Mammary epithelial cell (primary cell): ENCODE measurements at regions of chr12 and their contacts with region 1.

Region 1: GRCh38 chr12:92145731-92146496 is at the start of gene BTG1:
- DNase-seq: peak; percentile 100
- H3K4me3 ChIP-seq: peak within 1 kb of the TSS; percentile 83 to 100 (median 88)
- H3K27ac ChIP-seq: peak within 1 kb of the TSS; percentile 92
- H3K4me1 ChIP-seq: peaks cover 8% of the 10 kb centered on the region
- H3K27me3 ChIP-seq: no peaks in the 10 kb centered on the region
- CTCF ChIP-seq: no peak
- total RNA-seq, gene BTG1: 26.8 to 68.2 TPM

Region 2: GRCh38 chr12:91382081-91382543 is 763.8 kb before region 1 on chr12:
- CTCF ChIA-PET with region 1: no interaction called
- dilution Hi-C with region 1: no loop called
- in situ Hi-C with region 1: loop called in 1 of 2 experiments (anchors 25 kb)
- intact Hi-C with region 1: loop called (anchors 1 kb)
- DNase-seq: peak; percentile 72
- H3K4me3 ChIP-seq: peak overlapping the region; percentile 39 to 45 (median 43)
- H3K27ac ChIP-seq: no peak overlapping the region
- H3K4me1 ChIP-seq: peaks cover 6% of the 10 kb centered on the region
- H3K27me3 ChIP-seq: no peaks in the 10 kb centered on the region
- CTCF ChIP-seq: peak; percentile 65 to 90

Region 3: GRCh38 chr12:91811481-91812287 is 334.2 kb before region 1 on chr12:
- CTCF ChIA-PET with region 1: interaction called, 10 read pairs
- dilution Hi-C with region 1: no loop called
- in situ Hi-C with region 1: no loop called
- intact Hi-C with region 1: loop called (anchors 1 kb)
- DNase-seq: peak; percentile 39
- H3K4me3 ChIP-seq: no peak overlapping the region
- H3K27ac ChIP-seq: no peak overlapping the region
- H3K4me1 ChIP-seq: peaks cover 6% of the 10 kb centered on the region
- H3K27me3 ChIP-seq: no peaks in the 10 kb centered on the region
- CTCF ChIP-seq: peak; percentile 75 to 79

Region 4: DNA sequence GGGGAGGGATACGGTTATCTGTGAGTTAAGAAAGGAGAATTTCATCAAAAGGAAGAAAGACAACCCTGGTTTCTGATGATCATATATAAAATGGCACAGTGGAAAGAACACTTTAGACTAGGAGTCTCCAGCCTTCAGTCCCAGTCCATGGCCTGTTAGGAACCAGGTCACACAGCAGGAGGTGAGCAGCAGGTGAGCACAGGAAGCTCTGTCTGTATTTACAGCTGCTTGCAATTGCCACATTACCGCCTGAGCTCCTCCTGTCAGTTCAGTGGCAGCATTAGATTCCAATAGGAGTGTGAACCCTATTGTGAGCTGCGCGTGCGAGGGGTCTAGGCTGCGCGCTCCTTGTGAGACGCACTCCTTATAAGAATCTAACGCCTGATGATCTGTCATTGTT is 138.1 kb before region 1 on chr12:
- CTCF ChIA-PET with region 1: no interaction called
- dilution Hi-C with region 1: no loop called
- in situ Hi-C with region 1: no loop called
- intact Hi-C with region 1: loop called (anchors 1 kb)
- DNase-seq: no peak
- H3K4me3 ChIP-seq: no peak overlapping the region
- H3K27ac ChIP-seq: no peak overlapping the region
- H3K4me1 ChIP-seq: no peaks in the 10 kb centered on the region
- H3K27me3 ChIP-seq: no peaks in the 10 kb centered on the region
- CTCF ChIP-seq: no peak

Region 5: DNA sequence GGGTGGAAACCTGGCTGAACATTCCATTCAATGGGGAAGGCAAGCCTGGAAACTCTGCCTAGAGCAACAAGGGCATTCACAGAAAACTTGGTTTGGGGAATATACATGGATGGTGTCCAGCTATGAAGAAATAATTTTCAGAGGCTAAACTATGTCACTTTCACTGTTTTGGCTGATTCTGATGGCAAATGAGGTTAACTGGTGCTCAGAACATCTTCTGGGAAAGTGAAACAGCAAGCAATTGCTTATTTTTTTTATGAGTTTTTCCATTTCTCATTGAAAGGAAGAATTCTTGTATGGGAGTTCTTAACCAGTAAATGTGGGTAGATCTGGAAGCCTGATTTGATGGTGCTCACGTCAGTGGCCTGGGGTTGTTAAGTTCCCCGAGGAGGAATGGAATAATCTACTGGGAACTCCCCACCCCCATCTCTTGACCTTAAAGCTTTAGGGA is 132.5 kb after region 1 on chr12:
- CTCF ChIA-PET with region 1: no interaction called
- dilution Hi-C with region 1: no loop called
- in situ Hi-C with region 1: no loop called
- intact Hi-C with region 1: no loop called
- DNase-seq: no peak
- H3K4me3 ChIP-seq: no peak overlapping the region
- H3K27ac ChIP-seq: no peak overlapping the region
- H3K4me1 ChIP-seq: no peaks in the 10 kb centered on the region
- H3K27me3 ChIP-seq: no peaks in the 10 kb centered on the region
- CTCF ChIP-seq: no peak

Region 6: DNA sequence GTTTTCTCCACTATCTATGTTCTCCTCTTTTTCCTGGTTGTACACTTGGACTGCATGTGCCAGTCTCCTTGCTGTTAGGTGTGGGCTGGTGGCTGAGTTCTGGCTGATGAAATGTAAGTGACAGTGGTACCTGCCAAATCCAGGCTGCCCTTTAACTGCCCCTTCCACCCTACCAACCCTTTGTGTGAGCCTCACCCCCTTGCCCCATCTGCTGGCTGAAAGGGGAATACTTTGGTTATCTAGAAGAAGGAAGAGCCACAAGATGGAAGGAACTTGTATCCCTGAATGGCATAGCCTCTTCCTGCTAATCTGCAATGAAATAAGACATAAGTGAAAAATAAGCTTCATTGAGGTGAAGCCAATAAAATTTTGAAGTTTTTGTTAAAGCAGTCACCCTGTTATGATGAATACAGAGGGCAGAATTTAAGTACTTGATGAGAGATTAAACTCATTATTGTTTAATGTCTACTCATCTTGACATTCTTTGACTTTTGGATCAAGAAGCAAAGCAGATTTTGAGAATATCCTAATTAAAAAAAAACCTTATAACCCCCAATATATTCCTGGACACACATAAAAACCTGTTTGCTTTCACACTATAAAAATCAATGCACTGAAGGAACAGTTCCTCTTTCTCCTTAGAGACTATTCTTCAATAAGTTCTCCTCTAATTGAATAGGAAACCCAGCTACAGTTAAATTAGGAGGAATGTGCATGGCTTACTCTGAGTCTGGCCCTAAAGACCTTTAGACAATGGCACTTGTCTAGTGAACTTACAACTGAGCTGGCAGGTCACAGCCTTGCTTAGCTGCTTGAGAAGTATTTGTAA is 262.4 kb after region 1 on chr12:
- CTCF ChIA-PET with region 1: no interaction called
- dilution Hi-C with region 1: no loop called
- in situ Hi-C with region 1: no loop called
- intact Hi-C with region 1: loop called (anchors 1 kb)
- DNase-seq: peak; percentile 55
- H3K4me3 ChIP-seq: no peak overlapping the region
- H3K27ac ChIP-seq: no peak overlapping the region
- H3K4me1 ChIP-seq: no peaks in the 10 kb centered on the region
- H3K27me3 ChIP-seq: no peaks in the 10 kb centered on the region
- CTCF ChIP-seq: peak; percentile 66 to 75

Region 7: GRCh38 chr12:92608151-92609091 is 462.5 kb after region 1 on chr12:
- CTCF ChIA-PET with region 1: interaction called, 6 read pairs
- dilution Hi-C with region 1: no loop called
- in situ Hi-C with region 1: no loop called
- intact Hi-C with region 1: loop called (anchors 5 kb)
- DNase-seq: peak; percentile 67
- H3K4me3 ChIP-seq: no peak overlapping the region
- H3K27ac ChIP-seq: no peak overlapping the region
- H3K4me1 ChIP-seq: peaks cover 18% of the 10 kb centered on the region
- H3K27me3 ChIP-seq: no peaks in the 10 kb centered on the region
- CTCF ChIP-seq: peak; percentile 61 to 70